ENCODE measurements at regions of chr1 and their contacts with region 1.

Region 1: DNA sequence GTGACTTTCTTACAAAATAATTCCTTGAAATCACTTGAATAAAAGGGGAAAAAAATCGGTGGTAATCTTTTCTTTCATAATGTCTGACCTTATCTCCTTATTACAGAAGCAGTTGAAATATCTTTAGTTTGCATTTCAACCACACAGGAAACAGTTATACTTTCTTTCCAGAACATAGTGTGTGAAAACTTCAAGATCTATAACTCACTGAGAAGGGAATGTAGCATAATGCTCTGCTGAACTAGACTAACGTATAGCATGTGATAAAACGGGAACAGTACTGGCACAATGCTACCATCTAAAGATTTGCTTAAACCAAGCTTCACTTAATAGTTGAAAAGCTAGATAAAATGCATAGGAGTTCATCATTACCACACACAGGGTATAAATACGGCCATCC is 45.0 kb downstream of the VAV3 start:
- DNase-seq: no peak
- H3K4me3 ChIP-seq: no peak overlapping the region
- H3K27ac ChIP-seq: no peak overlapping the region
- H3K4me1 ChIP-seq: no peaks in the 10 kb centered on the region
- H3K27me3 ChIP-seq: no peaks in the 10 kb centered on the region
- CTCF ChIP-seq: no peak
- POLR2A ChIP-seq: no peak

Region 2: GRCh38 chr1:107840725-107841124 is 79.2 kb before region 1 on chr1:
- intact Hi-C with region 1: no loop called
- DNase-seq: no peak
- H3K4me3 ChIP-seq: no peak overlapping the region
- H3K27ac ChIP-seq: no peak overlapping the region
- H3K4me1 ChIP-seq: no peaks in the 10 kb centered on the region
- H3K27me3 ChIP-seq: no peaks in the 10 kb centered on the region
- CTCF ChIP-seq: no peak
- POLR2A ChIP-seq: no peak

Region 3: DNA sequence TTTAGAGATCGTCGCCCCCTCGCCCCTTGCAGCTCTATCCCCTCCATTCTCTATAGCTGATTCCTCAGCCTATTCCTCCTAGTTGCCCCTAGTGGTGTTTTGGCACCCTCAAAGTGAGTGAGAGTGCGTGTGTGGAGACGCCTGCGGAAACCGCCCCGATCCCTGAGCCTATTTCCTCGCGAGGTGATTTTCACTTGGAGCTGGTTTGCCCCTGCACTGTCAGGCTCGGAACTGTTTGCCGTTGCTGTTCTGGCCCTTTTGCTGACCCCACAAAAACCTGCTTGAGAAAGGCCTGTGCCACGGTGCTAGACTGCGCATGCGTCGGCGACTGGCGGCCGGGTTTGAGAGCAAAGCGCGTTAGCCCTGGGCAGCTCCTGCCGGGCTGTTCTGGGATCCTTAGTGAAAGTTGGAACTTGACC is 45.6 kb after region 1 on chr1:
- intact Hi-C with region 1: no loop called
- DNase-seq: no peak
- H3K4me3 ChIP-seq: peak overlapping the region; percentile 50 to 56
- H3K27ac ChIP-seq: peak overlapping the region; percentile 29
- H3K4me1 ChIP-seq: peaks cover 14% of the 10 kb centered on the region
- H3K27me3 ChIP-seq: no peaks in the 10 kb centered on the region
- CTCF ChIP-seq: no peak
- POLR2A ChIP-seq: peak in 1 of 2 donors; percentile 7

Region 4: DNA sequence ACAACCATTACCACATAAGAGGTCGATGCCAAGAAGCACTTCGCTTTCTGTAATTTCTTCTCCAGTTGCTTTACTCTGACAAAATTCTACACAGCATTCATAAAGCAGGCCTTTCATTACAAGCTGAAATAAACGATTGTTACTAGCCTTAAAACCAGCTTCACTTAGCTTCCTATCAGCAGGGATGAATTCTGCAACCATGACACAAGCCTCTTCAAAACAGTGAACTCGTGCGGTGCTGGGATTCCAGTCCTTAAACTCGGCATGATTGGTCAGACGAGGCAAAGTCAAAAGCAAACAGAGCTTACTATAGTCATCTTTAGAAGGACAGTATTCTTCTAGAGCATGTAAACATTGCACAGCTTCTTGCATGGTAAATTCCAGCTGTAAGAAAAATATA is 1091.4 kb after region 1 on chr1:
- intact Hi-C with region 1: loop called (anchors 5 kb)
- DNase-seq: no peak
- H3K4me3 ChIP-seq: no peak overlapping the region
- H3K27ac ChIP-seq: no peak overlapping the region
- H3K4me1 ChIP-seq: no peaks in the 10 kb centered on the region
- H3K27me3 ChIP-seq: no peaks in the 10 kb centered on the region
- CTCF ChIP-seq: no peak
- POLR2A ChIP-seq: no peak

Measured in vagina (tissue), 2 donors.